Ascending aorta (tissue), 2 donors: ENCODE measurements at regions of chr18 and their contacts with region 1.

Region 1: DNA sequence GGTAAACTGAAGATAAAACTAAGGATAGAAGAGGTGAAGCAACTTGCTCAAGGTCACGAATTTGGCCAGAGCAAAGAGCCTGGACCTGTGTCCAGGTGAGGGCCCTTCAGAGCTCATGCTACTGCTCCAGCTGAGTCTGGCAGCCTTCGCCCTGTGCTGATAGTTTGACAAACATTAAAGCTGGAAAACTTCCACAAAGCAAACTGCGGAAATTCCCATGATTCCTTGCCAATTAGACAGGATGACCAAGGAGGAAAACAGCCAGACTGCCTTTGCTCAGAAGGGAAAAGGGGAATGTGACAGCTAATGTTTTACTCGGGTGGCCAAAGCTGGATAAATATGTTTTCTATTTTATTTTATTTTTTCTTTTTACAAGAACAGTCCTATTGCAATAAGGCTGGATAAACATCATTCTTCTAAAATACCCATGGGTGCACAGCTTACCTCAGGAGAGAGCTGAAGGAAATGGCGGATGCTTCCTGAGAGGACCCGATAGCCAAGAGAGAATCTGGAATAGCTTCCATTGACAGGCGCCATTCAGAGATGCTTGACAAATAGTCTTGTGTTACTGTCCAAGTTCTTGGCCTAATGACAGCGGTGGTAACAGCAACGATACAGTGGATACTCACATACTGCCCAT is 5.3 kb upstream of the CTAGE1 start:
- DNase-seq: peak in 1 of 2 donors; percentile 80
- H3K4me3 ChIP-seq: no peak overlapping the region
- H3K27ac ChIP-seq: peak overlapping the region; percentile 71
- H3K4me1 ChIP-seq: peaks cover 8 to 26% of the 10 kb centered on the region in 2 donors
- H3K27me3 ChIP-seq: no peaks in the 10 kb centered on the region
- CTCF ChIP-seq: no peak

Region 2: GRCh38 chr18:22385718-22386117 is 37.3 kb before region 1 on chr18:
- intact Hi-C with region 1: loop called (anchors 5 kb)
- DNase-seq: no peak
- H3K4me3 ChIP-seq: no peak overlapping the region
- H3K27ac ChIP-seq: no peak overlapping the region
- H3K4me1 ChIP-seq: peaks cover 0 to 6% of the 10 kb centered on the region in 2 donors
- H3K27me3 ChIP-seq: no peaks in the 10 kb centered on the region
- CTCF ChIP-seq: no peak